Head of caudate nucleus (tissue), 42 donors: ENCODE measurements at regions of chr17 and their contacts with region 1.

Region 1: DNA sequence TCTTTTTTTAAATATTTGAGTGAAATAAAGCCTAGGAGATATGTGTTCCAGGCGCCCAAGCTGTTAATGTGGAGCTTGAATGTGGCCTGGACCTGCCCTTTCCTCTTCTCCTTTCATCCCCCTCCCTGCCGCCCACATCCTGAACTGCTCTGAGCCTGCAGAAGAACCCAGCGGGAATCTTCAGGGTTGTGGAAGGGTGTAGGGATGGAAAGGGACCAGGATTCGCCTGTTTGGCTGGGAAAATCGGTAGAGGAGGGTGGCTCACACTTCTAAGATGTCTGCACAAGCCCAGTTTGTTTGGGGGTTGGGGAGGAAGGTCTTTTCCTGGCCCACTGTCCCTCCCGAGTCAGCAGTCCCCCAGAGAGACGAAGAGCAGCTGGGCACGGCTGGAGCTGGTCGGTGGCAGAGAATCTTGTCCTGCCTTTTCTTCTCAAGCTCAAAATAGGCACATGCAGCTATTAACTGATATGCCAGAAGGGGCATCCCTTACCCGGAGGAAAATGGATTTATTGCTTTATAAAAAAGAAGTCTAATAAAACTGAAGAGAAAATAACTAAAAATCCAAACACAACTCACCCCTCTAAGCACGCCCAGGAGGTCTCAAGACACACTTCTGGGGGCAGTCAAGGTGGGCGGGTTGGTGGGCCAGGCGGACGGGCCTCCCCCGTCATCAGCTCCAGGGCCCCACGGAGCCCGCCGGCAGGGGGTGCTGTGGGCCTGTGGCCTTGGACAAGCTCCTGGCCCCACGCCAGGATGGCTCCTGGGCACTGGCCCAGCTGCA is 11.5 kb upstream of the PITPNA start:
- DNase-seq: peak; percentile 51 to 94 (median 82)

Region 2: DNA sequence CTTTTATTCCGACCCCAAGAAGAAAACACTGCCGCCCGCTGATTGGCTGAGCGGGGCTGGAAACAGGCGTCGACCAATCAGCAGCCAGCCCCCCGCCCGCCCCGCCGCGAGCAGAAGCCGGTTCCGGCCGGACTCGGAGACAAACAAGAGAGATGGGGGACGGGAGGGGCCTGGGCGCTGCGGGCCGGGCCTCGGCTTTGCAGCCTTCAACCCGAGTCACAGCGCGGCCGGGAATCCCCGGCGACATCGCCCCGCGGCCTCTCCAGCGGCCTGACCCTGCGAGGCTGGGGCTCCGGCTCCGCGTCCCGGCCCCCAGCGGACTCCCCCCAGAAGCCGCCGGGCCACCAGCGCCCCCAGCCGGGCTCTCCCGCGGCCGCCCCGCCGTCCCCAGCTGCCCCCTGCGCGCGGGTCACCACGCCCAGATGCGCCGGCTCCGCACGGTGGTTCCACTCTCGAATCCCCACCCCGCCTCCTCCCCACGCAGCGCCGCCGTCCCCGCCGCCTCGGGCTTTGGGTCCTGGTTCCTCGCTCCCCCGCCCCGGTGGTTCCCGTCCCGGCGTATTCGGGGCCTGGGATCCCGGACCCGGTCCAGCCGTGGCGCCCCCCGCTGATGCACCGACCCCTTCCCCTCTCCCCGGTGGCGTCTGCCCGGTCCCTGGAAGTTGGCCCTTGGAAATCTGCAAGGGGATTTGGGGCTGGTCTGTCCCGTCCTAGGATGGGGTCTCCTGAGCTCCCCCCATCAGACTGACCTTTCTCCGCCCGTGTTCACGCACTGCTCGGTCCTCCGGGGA is 54.9 kb after region 1 on chr17:
- intact Hi-C with region 1: loop called (anchors 5 kb)
- DNase-seq: peak; percentile 94 to 99 (median 97)

Region 3: DNA sequence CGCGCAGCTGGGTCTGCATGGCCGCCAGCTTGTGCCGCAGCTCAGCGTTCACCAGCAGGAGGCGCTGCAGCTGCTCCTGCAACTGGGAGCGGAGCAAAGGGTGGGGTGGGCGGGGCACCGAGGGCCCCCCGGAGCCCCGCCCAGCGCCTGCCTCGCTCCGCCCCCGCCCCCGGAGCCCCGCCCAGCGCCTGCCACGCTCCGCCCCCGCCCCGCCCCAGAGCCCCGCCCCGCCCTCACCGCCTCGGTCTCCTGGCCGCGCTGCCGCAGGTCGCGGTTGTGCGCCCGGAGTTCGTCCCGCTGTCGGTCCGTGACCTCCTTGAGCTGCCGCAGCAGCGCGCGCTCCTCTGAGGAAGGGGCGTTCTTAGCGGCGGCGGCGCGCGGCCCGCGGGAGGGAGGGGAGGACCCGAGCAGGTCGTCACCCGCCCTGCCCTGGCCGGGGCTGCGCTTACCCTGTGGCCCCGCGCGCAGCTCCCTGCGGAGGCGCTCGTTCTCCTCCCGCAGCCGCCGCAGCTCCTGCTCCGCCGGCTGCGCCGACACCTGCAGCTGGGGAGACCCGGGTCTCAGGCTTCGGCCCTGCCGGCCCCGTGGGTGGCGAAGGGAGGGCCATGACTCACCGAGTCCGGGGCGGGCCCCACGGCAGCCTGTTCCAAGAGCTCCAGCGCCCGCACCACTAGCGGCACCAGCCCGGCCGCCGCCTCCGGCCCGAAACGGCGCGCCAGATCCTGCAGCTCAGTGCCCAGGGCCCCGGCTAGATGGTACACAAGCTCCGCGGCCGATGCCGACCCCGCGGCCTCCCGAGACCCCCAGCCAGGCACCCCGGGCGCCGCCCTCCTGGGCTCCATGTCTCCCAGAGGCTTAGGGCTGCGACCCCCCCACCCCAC is 75.1 kb after region 1 on chr17:
- intact Hi-C with region 1: loop called (anchors 5 kb)
- DNase-seq: peak; percentile 88 to 98 (median 95)

Region 4: DNA sequence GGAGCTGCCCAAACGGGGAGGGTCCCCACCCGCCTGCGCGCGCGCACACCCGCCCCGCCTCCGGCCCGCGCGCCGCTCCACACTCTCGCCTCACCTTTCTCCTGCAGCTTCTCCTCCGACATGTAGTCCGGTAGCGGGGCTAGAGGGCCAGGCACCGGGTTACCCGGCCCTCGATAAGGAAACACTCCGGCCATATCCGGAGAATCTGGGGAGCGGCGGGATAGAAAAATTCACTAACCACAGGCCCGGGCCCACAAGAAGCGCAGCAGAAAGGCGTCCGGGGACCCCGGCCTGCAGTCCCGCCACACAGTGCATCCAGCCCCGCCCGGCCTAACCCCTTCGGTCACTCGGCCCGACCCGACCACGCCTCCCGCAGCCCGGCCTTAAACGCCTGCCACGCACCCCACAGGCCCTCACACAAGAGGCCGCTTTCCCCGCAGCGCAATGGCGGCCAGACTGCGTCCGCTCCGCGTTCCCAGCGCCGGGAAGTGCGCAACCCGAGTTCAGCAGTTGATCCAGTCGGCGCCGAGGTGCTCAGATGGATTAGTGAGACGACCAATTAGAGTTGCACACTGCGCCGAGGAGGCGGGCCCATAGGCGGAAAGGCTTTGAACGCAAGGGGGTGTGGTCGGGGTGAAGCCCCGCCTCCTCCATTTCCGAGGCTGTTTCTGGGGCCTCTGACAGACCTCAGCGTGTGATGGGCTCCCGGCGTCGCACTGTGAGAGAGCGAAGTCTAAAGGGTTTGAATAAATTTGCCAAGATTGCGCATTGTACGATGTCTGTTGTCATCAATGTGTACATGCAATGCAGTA is 110.5 kb after region 1 on chr17 and contains the start of gene PRPF8:
- intact Hi-C with region 1: no loop called
- DNase-seq: peak; percentile 94 to 99 (median 98)

Region 5: GRCh38 chr17:1716076-1716995 is 142.2 kb after region 1 on chr17:
- intact Hi-C with region 1: loop called (anchors 10 kb)
- DNase-seq: peak; percentile 99 to 100 (median 100)